ENCODE measurements at regions of chr9 and their contacts with region 1.

Region 1: GRCh38 chr9:131590908-131591844 is 45.9 kb downstream of the PRRT1B start:
- DNase-seq: peak; percentile 67 to 91 (median 79)
- ATAC-seq: peak; percentile 65 to 96 (median 94)
- H3K4me3 ChIP-seq: no peak overlapping the region
- H3K27ac ChIP-seq: no peak overlapping the region
- H3K4me1 ChIP-seq: no peaks in the 10 kb centered on the region
- H3K27me3 ChIP-seq: no peaks in the 10 kb centered on the region
- CTCF ChIP-seq: peak; percentile 35 to 61 (median 54)

Region 2: DNA sequence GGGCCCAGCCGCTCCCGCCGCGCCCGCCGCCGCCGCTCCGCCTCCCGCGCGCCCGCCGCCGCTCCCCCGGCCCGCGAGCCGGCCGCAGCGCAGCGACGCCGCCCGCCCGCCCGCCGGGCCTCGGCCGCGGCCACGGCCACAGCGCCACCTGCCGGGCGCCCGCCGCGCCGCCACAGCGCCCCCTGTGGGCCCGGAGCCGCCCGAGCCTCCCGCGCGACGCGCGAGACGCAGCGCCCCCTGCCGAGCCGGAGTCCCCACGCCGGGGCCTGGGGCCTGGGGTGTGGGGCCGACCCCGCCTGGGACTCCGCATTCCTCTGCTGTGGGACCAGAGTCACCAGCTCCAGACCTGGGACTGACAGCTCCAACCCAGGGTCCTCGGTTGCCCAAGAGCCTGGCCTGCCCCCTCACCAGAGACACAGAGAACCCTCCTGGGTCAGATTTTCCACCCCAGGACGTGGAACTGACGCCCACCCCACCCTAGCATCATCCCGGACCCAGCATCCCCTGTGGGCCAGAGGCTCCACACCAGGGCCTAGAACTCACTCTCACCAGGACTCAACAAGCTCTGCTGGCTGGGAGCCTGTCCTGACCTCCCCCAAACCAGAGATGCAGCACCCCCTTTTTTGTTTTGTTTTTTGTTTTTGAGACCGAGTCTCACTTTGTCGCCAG is 148.9 kb after region 1 on chr9 and contains the start of gene RAPGEF1:
- intact Hi-C with region 1: loop called in 2 of 3 experiments (anchors 2 kb)
- DNase-seq: peak; percentile 57 to 97 (median 84)
- ATAC-seq: peak; percentile 44 to 76 (median 61)
- H3K4me3 ChIP-seq: peak within 1 kb of the TSS; percentile 32 to 70 (median 52)
- H3K27ac ChIP-seq: peak within 1 kb of the TSS; percentile 59 to 86 (median 74)
- H3K4me1 ChIP-seq: peaks cover 26 to 47% (median 29%) of the 10 kb centered on the region in 3 donors
- H3K27me3 ChIP-seq: no peaks in the 10 kb centered on the region
- CTCF ChIP-seq: peak; percentile 71 to 79 (median 73)
- total RNA-seq, gene RAPGEF1: 38.8 to 62.6 (median 52.3) TPM

Region 3: DNA sequence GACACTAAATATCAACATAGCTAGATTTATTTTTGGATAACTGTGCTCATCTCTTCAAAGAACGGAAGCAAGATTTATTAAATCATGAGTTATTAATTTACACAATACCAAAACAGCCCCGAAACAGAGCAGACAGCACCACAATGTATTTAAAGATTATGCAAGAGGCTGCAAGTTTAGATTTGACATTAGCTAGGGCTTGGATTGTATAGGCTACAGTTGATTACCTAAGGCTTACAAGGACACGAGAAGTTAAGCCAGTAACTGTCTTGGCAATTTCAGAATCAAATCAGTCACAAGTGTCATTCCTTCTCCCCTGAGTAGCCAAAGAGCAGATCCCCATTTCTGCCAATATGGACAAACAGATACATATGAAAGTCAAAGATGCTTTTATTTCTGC is 335.9 kb after region 1 on chr9:
- intact Hi-C with region 1: no loop called
- DNase-seq: no peak
- ATAC-seq: no peak
- H3K4me3 ChIP-seq: no peak overlapping the region
- H3K27ac ChIP-seq: no peak overlapping the region
- H3K4me1 ChIP-seq: no peaks in the 10 kb centered on the region
- H3K27me3 ChIP-seq: no peaks in the 10 kb centered on the region
- CTCF ChIP-seq: no peak